Activated CD4-positive, alpha-beta memory T cell treated with anti-CD3 and anti-CD28 coated beads for 36 hours (primary cell): ENCODE measurements at regions of chr7 and their contacts with region 1.

Region 1: DNA sequence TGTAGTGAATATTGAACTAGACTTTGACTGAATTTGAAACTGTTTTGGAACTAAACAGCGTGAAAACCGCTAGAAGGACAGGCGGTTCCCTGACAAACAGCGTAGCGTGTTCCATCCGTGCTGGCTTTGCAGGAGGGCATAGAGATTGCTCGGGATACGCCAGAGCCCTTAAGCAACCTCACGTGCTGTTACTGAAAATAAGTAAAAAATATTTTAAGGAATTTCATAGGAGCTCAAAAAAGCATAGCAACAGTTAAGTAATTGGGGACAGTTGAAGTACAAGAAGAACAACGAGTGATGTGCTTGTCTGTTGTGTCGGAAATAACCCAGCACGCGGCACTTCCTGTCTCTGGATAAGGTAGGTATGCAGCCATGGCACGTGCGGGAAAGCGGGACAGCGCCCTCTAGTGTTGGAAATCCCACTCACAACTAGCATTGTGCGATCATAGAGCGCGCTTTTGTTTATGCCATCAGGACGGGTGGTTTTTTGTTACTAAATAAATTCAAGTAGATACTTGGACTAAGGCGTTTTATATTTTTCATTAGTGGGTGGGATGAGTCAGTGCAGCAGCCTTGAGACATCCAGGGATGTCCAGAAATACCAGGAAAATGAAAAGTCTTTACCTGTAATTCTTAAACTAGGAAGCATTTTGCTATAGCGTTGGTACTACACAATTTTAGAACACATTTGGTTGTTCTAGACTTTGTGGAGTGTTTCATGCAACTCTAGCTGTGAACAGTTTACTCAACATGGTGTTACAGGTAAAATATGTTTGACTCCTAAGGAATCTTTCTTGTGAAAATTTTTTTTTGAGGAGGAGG is 50.4 kb downstream of the DNAJB6 start:
- DNase-seq: peak; percentile 94
- H3K4me3 Mint-ChIP-seq: no peak overlapping the region
- H3K27ac Mint-ChIP-seq: peak overlapping the region; percentile 72
- H3K4me1 Mint-ChIP-seq: peaks cover 39% of the 10 kb centered on the region
- H3K27me3 Mint-ChIP-seq: no peaks in the 10 kb centered on the region

Region 2: GRCh38 chr7:157375410-157375809 is 11.8 kb before region 1 on chr7:
- CTCF ChIA-PET with region 1: interaction called, 12 read pairs
- POLR2A ChIA-PET with region 1: interaction called, 3 read pairs
- intact Hi-C with region 1: no loop called
- DNase-seq: no peak
- H3K4me3 Mint-ChIP-seq: no peak overlapping the region
- H3K27ac Mint-ChIP-seq: peak overlapping the region; percentile 34
- H3K4me1 Mint-ChIP-seq: peaks cover 58% of the 10 kb centered on the region
- H3K27me3 Mint-ChIP-seq: no peaks in the 10 kb centered on the region